CD4-positive, alpha-beta T cell (primary cell): ENCODE measurements at regions of chr14 and their contacts with region 1.

Region 1: DNA sequence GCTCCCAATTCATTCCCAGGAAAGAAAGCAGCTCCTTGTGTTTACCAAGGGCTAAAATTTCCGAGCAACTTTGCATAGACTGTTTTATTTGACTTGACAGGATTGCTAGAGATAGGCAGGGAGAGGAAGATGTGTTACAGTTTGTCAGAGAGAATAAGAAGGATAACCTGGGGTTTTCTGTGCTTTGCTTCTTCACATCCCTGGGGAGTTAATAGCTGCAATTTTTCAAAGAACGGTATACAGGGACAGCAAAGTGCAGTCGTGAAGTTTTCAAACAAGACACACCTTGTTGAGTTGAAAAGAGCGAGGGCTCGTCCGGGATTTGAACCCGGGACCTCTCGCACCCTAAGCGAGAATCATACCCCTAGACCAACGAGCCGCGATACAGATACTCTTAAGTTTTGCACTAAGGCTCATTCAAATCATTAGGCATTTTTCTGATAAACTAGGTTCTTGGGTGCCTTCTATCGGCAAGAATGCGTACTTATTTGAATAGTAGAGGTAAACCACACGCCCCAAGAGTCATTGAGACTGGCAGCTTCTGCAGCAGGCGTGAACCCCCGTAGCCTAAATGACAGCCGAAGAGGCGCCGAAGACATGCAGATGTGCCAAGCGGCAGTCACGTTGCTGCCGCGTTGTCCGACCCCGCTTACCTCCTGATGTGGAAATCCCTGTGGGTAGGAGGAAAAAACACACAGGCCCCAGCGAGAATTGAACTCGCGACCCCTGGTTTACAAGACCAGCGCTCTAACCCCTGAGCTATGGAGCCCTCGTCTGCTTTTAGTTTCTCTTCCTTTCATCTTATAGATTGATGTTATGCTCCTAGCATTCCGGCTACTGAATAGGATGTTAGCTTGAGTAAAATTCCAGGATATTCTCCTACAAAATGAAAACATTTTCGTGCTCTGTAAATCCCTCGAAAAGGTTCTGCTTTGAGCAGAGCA is 22.2 kb upstream of the RNASE12 start:
- DNase-seq: peak; percentile 65 to 95 (median 78)
- ATAC-seq: peak; percentile 83
- H3K4me3 ChIP-seq: peak overlapping the region; percentile 64
- H3K4me3 Mint-ChIP-seq: no peak overlapping the region
- H3K27ac ChIP-seq: peak overlapping the region in 1 of 2 donors; percentile 43
- H3K27ac Mint-ChIP-seq: no peak overlapping the region
- H3K4me1 ChIP-seq: peaks cover 37% of the 10 kb centered on the region
- H3K4me1 Mint-ChIP-seq: no peaks in the 10 kb centered on the region
- H3K27me3 ChIP-seq: no peaks in the 10 kb centered on the region
- H3K27me3 Mint-ChIP-seq: peaks cover 7% of the 10 kb centered on the region
- CTCF ChIP-seq: peak; percentile 55

Region 2: DNA sequence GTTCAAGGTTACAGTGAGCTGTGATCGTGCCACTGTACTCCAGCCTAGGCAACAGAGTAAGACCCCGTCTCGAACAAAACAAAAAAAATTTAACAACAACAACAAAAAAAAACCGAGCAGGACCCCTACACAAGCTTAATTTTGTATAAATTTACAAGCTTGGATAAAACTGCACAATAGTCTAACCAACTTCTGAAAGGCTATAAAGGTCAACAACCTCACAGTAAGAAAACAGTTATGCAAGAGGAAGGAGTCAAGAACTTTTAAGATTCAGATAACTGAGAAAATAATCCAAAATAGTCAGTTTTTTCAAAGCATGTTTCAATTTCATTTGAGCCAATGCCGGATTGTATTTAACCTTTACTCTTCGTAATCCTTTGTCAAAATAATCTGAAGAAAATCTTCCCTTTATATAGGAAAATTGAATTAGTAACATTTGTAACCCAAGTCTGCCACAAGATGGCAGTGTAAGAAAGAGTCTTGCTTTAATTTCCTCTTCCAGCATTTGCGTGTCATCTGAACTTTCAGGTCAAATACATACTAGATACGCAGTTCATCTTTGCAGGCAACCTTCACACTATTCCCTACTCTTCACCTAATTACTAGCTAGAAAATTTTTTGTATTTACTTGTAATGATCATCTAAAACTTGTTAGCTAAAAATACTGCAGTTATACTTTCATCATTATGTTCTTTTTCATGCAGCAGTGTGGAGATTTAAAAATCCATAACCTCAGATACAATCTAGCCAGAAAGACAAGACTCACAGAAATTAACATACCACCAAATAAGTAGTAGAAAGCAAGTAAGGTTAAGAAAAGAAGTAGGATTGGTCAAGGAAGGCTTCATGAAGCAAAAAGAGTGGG is 286.1 kb before region 1 on chr14:
- CTCF ChIA-PET with region 1: interaction called, 13 read pairs
- POLR2A ChIA-PET with region 1: interaction called, 19 read pairs
- intact Hi-C with region 1: loop called (anchors 1 kb)
- DNase-seq: peak in 5 of 14 experiments; percentile 14 to 84 (median 79)
- ATAC-seq: peak; percentile 72
- H3K4me3 ChIP-seq: no peak overlapping the region
- H3K4me3 Mint-ChIP-seq: peak overlapping the region; percentile 31
- H3K27ac ChIP-seq: peak overlapping the region in 1 of 2 donors; percentile 35
- H3K27ac Mint-ChIP-seq: peak overlapping the region; percentile 80
- H3K4me1 ChIP-seq: no peaks in the 10 kb centered on the region
- H3K4me1 Mint-ChIP-seq: peaks cover 30% of the 10 kb centered on the region
- H3K27me3 ChIP-seq: no peaks in the 10 kb centered on the region
- H3K27me3 Mint-ChIP-seq: no peaks in the 10 kb centered on the region
- CTCF ChIP-seq: peak; percentile 87

Region 3: DNA sequence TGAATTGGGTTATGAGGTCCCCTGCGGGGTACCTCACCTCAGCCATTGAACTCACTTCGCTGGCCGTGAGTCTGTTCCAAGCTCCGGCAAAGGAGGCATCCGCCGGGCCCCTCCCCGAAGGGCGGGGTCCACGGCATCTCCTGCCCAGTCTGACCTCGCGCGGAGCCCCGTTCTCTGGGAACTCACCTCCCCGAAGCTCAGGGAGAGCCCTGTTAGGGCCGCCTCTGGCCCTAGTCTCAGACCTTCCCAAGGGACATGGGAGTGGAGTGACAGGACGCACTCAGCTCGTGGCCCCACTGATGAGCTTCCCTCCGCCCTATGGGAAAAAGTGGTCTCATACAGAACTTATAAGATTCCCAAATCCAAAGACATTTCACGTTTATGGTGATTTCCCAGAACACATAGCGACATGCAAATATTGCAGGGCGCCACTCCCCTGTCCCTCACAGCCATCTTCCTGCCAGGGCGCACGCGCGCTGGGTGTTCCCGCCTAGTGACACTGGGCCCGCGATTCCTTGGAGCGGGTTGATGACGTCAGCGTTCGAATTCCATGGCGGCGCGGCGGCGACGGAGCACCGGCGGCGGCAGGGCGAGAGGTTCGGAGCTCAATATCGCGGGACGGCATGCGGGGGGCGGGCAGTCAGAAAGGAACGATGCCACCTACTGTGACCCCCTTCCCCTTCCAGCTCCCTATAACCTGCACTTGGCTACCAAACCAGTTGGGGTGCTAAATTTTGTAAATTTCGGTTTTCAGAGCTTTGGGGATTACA is 270.1 kb before region 1 on chr14 and contains the start of gene PARP2:
- CTCF ChIA-PET with region 1: interaction called, 3 read pairs
- POLR2A ChIA-PET with region 1: interaction called, 17 read pairs
- intact Hi-C with region 1: loop called in 1 of 2 experiments (anchors 5 kb)
- DNase-seq: peak; percentile 70 to 97 (median 82)
- ATAC-seq: peak; percentile 81
- H3K4me3 ChIP-seq: peak within 1 kb of the TSS; percentile 83
- H3K4me3 Mint-ChIP-seq: peak within 1 kb of the TSS; percentile 99
- H3K27ac ChIP-seq: peak within 1 kb of the TSS; percentile 92 to 95
- H3K27ac Mint-ChIP-seq: peak within 1 kb of the TSS; percentile 97
- H3K4me1 ChIP-seq: no peaks in the 10 kb centered on the region
- H3K4me1 Mint-ChIP-seq: peaks cover 11% of the 10 kb centered on the region
- H3K27me3 ChIP-seq: no peaks in the 10 kb centered on the region
- H3K27me3 Mint-ChIP-seq: no peaks in the 10 kb centered on the region
- CTCF ChIP-seq: no peak
- total RNA-seq, gene PARP2: 16.3 to 20.4 TPM

Region 4: GRCh38 chr14:20427231-20428009 is 185.9 kb before region 1 on chr14:
- CTCF ChIA-PET with region 1: no interaction called
- POLR2A ChIA-PET with region 1: no interaction called
- intact Hi-C with region 1: no loop called
- DNase-seq: peak in 3 of 14 experiments; percentile 28 to 32 (median 31)
- ATAC-seq: no peak
- H3K4me3 ChIP-seq: no peak overlapping the region
- H3K4me3 Mint-ChIP-seq: peak overlapping the region; percentile 30
- H3K27ac ChIP-seq: no peak overlapping the region
- H3K27ac Mint-ChIP-seq: peak overlapping the region; percentile 29
- H3K4me1 ChIP-seq: peaks cover 29% of the 10 kb centered on the region
- H3K4me1 Mint-ChIP-seq: peaks cover 34% of the 10 kb centered on the region
- H3K27me3 ChIP-seq: no peaks in the 10 kb centered on the region
- H3K27me3 Mint-ChIP-seq: no peaks in the 10 kb centered on the region
- CTCF ChIP-seq: no peak

Region 5: GRCh38 chr14:20454516-20455354 is 158.6 kb before region 1 on chr14 and contains the starts of genes APEX1 and OSGEP:
- CTCF ChIA-PET with region 1: interaction called, 4 read pairs
- POLR2A ChIA-PET with region 1: interaction called, 14 read pairs
- intact Hi-C with region 1: loop called (anchors 2 to 5 kb)
- DNase-seq: peak; percentile 94 to 100 (median 97)
- ATAC-seq: peak; percentile 77
- H3K4me3 ChIP-seq: peak within 1 kb of the TSS; percentile 66
- H3K4me3 Mint-ChIP-seq: no peak within 1 kb of the TSS
- H3K27ac ChIP-seq: peak within 1 kb of the TSS; percentile 92 to 97
- H3K27ac Mint-ChIP-seq: no peak within 1 kb of the TSS
- H3K4me1 ChIP-seq: peaks cover 37% of the 10 kb centered on the region
- H3K4me1 Mint-ChIP-seq: peaks cover 6% of the 10 kb centered on the region
- H3K27me3 ChIP-seq: no peaks in the 10 kb centered on the region
- H3K27me3 Mint-ChIP-seq: no peaks in the 10 kb centered on the region
- CTCF ChIP-seq: no peak
- total RNA-seq, gene APEX1: 125 to 127 TPM
- total RNA-seq, gene OSGEP: 49.2 to 52.9 TPM

Region 6: GRCh38 chr14:20530771-20531571 is 82.4 kb before region 1 on chr14:
- CTCF ChIA-PET with region 1: interaction called, 3 read pairs
- POLR2A ChIA-PET with region 1: no interaction called
- intact Hi-C with region 1: loop called (anchors 5 kb)
- DNase-seq: peak; percentile 51 to 86 (median 64)
- ATAC-seq: peak; percentile 67
- H3K4me3 ChIP-seq: no peak overlapping the region
- H3K4me3 Mint-ChIP-seq: no peak overlapping the region
- H3K27ac ChIP-seq: no peak overlapping the region
- H3K27ac Mint-ChIP-seq: no peak overlapping the region
- H3K4me1 ChIP-seq: peaks cover 3% of the 10 kb centered on the region
- H3K4me1 Mint-ChIP-seq: peaks cover 7% of the 10 kb centered on the region
- H3K27me3 ChIP-seq: no peaks in the 10 kb centered on the region
- H3K27me3 Mint-ChIP-seq: peaks cover 5% of the 10 kb centered on the region
- CTCF ChIP-seq: peak; percentile 70

Region 7: GRCh38 chr14:20682435-20683124 is 69.2 kb after region 1 on chr14:
- CTCF ChIA-PET with region 1: interaction called, 14 read pairs
- POLR2A ChIA-PET with region 1: interaction called, 61 read pairs
- intact Hi-C with region 1: loop called (anchors 1 kb)
- DNase-seq: peak; percentile 62 to 93 (median 74)
- ATAC-seq: peak; percentile 60
- H3K4me3 ChIP-seq: peak overlapping the region; percentile 79
- H3K4me3 Mint-ChIP-seq: no peak overlapping the region
- H3K27ac ChIP-seq: peak overlapping the region; percentile 94 to 95
- H3K27ac Mint-ChIP-seq: no peak overlapping the region
- H3K4me1 ChIP-seq: peaks cover 53% of the 10 kb centered on the region
- H3K4me1 Mint-ChIP-seq: peaks cover 5% of the 10 kb centered on the region
- H3K27me3 ChIP-seq: no peaks in the 10 kb centered on the region
- H3K27me3 Mint-ChIP-seq: peaks cover 7% of the 10 kb centered on the region
- CTCF ChIP-seq: no peak